Heart left ventricle (tissue), 16 donors: ENCODE measurements at regions of chr4 and their contacts with region 1.

Region 1: GRCh38 chr4:158624889-158625478 is 46.7 kb downstream of the C4orf46 start:
- DNase-seq: no peak
- ATAC-seq: peak; percentile 66 to 86 (median 80)
- H3K4me3 ChIP-seq: no peak overlapping the region
- H3K27ac ChIP-seq: peak overlapping the region in 6 of 12 donors; percentile 1 to 56 (median 32)
- H3K4me1 ChIP-seq: peaks cover 0 to 18% (median 0%) of the 10 kb centered on the region in 12 donors
- H3K27me3 ChIP-seq: no peaks in the 10 kb centered on the region
- CTCF ChIP-seq: peak; percentile 57 to 81 (median 66)
- POLR2A ChIP-seq: no peak

Region 2: GRCh38 chr4:157992038-157992705 is 632.8 kb before region 1 on chr4:
- intact Hi-C with region 1: loop called in 4 of 10 experiments (anchors 5 to 10 kb)
- DNase-seq: peak in 2 of 5 donors; percentile 58 to 73
- ATAC-seq: peak; percentile 73 to 92 (median 81)
- H3K4me3 ChIP-seq: peak overlapping the region in 11 of 12 donors; percentile 20 to 58 (median 46)
- H3K27ac ChIP-seq: peak overlapping the region; percentile 43 to 89 (median 72)
- H3K4me1 ChIP-seq: peaks cover 0 to 31% (median 5%) of the 10 kb centered on the region in 12 donors
- H3K27me3 ChIP-seq: no peaks in the 10 kb centered on the region
- CTCF ChIP-seq: peak; percentile 59 to 87 (median 76)
- POLR2A ChIP-seq: no peak

Region 3: GRCh38 chr4:158259955-158260575 is 364.9 kb before region 1 on chr4:
- intact Hi-C with region 1: loop called in 3 of 10 experiments (anchors 2 to 5 kb)
- DNase-seq: no peak
- ATAC-seq: no peak
- H3K4me3 ChIP-seq: no peak overlapping the region
- H3K27ac ChIP-seq: no peak overlapping the region
- H3K4me1 ChIP-seq: peaks cover 0 to 10% (median 0%) of the 10 kb centered on the region in 12 donors
- H3K27me3 ChIP-seq: no peaks in the 10 kb centered on the region
- CTCF ChIP-seq: peak in 8 of 12 donors; percentile 23 to 52 (median 42)
- POLR2A ChIP-seq: no peak

Region 4: DNA sequence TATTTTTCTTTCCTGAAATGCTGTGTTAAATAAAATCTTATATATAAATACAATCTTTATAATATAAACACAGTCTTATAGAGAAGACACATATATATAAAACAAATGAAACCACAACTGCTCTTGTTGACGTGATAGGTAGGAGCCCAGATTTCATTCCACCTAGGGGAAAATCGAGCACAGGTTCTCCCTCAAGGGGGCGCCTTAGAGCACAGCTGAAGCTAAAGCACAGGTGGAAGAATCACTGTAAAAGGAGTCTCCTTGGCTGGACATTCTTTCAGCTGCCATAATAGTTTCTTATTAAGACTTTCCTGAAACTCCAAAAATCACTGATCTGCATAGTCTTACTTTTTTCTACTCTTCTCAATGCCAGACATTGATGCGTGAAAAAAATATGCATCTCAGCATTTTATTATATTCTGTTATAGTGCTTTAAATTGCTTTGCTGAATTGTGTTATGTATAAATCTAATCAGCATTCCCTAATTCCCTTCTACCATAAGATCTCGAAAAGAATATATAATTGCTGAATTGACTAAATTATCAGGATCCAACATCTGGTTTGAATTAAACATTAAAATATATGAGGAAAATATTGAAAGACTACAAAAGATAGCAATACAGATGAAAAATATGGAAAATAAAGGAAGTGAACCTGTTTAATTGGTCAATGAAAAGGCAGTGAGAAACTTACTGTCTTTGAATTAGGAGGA is 128.8 kb before region 1 on chr4:
- intact Hi-C with region 1: loop called in 5 of 10 experiments (anchors 2 to 10 kb)
- DNase-seq: peak in 4 of 5 donors; percentile 21 to 55 (median 30)
- ATAC-seq: no peak
- H3K4me3 ChIP-seq: no peak overlapping the region
- H3K27ac ChIP-seq: no peak overlapping the region
- H3K4me1 ChIP-seq: no peaks in the 10 kb centered on the region
- H3K27me3 ChIP-seq: no peaks in the 10 kb centered on the region
- CTCF ChIP-seq: peak in 11 of 12 donors; percentile 26 to 63 (median 54)
- POLR2A ChIP-seq: no peak